ENCODE measurements at regions of chr5 and their contacts with region 1.

Region 1: DNA sequence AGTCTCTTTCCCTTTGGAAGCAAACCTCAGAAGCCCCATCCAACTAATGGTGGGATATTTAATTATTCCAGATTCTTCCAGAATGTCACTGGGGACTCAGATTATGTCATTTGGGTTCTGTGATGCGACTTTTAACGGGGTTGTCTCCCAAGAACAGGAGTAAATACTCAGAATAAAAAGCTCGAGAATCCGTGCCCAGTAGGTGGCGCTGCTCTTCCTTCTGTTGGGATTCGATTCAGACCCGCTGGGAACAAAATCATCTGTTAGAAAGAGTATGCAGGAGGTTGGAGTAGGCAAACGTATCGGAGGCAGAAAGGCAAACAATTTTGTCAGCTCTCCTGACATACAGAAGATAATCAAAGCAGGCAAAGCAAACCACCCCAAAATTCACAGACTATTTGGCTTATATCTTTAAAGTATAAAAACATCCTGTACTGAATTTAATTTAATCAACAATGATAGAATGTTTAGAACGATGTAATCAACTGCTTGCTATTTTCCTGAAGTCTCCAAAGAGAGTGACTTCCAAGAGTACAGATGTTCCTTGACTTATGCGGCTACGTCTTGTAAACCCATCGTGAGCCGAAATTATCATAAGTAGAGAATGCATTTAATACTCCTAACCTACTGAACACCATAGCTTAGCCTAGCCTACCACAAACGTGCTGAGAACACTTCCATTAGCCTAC is 169.8 kb upstream of the RAI14 start:
- DNase-seq: peak; percentile 86
- ATAC-seq: peak; percentile 58
- H3K4me3 Mint-ChIP-seq: no peak overlapping the region
- H3K27ac Mint-ChIP-seq: no peak overlapping the region
- H3K4me1 Mint-ChIP-seq: peaks cover 8% of the 10 kb centered on the region
- H3K27me3 Mint-ChIP-seq: peaks cover 38% of the 10 kb centered on the region

Region 2: GRCh38 chr5:34474573-34475021 is 11.7 kb before region 1 on chr5:
- CTCF ChIA-PET with region 1: interaction called, 33 read pairs
- POLR2A ChIA-PET with region 1: no interaction called
- intact Hi-C with region 1: no loop called
- DNase-seq: no peak
- ATAC-seq: peak; percentile 49
- H3K4me3 Mint-ChIP-seq: no peak overlapping the region
- H3K27ac Mint-ChIP-seq: no peak overlapping the region
- H3K4me1 Mint-ChIP-seq: no peaks in the 10 kb centered on the region
- H3K27me3 Mint-ChIP-seq: peaks cover 16% of the 10 kb centered on the region

Region 3: GRCh38 chr5:34522599-34523386 is 36.5 kb after region 1 on chr5:
- CTCF ChIA-PET with region 1: interaction called, 7 read pairs
- POLR2A ChIA-PET with region 1: no interaction called
- intact Hi-C with region 1: loop called in 1 of 2 experiments (anchors 5 kb)
- DNase-seq: peak; percentile 75
- ATAC-seq: peak; percentile 65
- H3K4me3 Mint-ChIP-seq: no peak overlapping the region
- H3K27ac Mint-ChIP-seq: no peak overlapping the region
- H3K4me1 Mint-ChIP-seq: peaks cover 3% of the 10 kb centered on the region
- H3K27me3 Mint-ChIP-seq: peaks cover 14% of the 10 kb centered on the region

Region 4: DNA sequence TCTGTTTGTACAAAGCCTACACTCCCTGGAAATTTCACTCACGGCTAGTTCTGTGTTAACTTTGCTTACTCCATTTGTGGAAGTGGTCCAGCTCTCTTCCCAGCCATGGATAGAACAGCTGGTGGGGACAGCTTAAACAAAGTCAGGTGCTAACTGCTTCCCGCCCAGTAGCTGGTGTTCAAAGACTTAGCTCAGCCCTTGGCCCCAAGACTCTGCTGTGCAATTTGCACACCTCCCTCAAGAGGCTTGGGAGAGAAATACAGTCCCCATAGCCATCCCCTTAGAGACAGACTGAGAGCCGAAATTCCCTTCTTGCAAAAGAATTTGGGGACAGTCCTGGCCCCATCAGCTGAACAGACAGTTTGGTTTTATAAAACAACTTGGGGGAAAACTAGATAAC is 96.1 kb after region 1 on chr5:
- CTCF ChIA-PET with region 1: no interaction called
- POLR2A ChIA-PET with region 1: no interaction called
- intact Hi-C with region 1: no loop called
- DNase-seq: no peak
- ATAC-seq: no peak
- H3K4me3 Mint-ChIP-seq: no peak overlapping the region
- H3K27ac Mint-ChIP-seq: no peak overlapping the region
- H3K4me1 Mint-ChIP-seq: peaks cover 11% of the 10 kb centered on the region
- H3K27me3 Mint-ChIP-seq: peaks cover 20% of the 10 kb centered on the region

Region 5: GRCh38 chr5:34632807-34633422 is 146.6 kb after region 1 on chr5:
- CTCF ChIA-PET with region 1: no interaction called
- POLR2A ChIA-PET with region 1: no interaction called
- intact Hi-C with region 1: no loop called
- DNase-seq: no peak
- ATAC-seq: no peak
- H3K4me3 Mint-ChIP-seq: no peak overlapping the region
- H3K27ac Mint-ChIP-seq: no peak overlapping the region
- H3K4me1 Mint-ChIP-seq: no peaks in the 10 kb centered on the region
- H3K27me3 Mint-ChIP-seq: peaks cover 5% of the 10 kb centered on the region

Region 6: GRCh38 chr5:34771064-34771463 is 284.8 kb after region 1 on chr5:
- CTCF ChIA-PET with region 1: no interaction called
- POLR2A ChIA-PET with region 1: no interaction called
- intact Hi-C with region 1: no loop called
- DNase-seq: no peak
- ATAC-seq: no peak
- H3K4me3 Mint-ChIP-seq: no peak overlapping the region
- H3K27ac Mint-ChIP-seq: no peak overlapping the region
- H3K4me1 Mint-ChIP-seq: no peaks in the 10 kb centered on the region
- H3K27me3 Mint-ChIP-seq: peaks cover 17% of the 10 kb centered on the region

Region 7: GRCh38 chr5:34838785-34839714 is 352.7 kb after region 1 on chr5 and contains the start of gene TTC23L:
- CTCF ChIA-PET with region 1: interaction called, 3 read pairs
- POLR2A ChIA-PET with region 1: no interaction called
- intact Hi-C with region 1: loop called in 1 of 2 experiments (anchors 5 kb)
- DNase-seq: peak; percentile 95
- ATAC-seq: peak; percentile 95
- H3K4me3 Mint-ChIP-seq: peak within 1 kb of the TSS; percentile 80
- H3K27ac Mint-ChIP-seq: peak within 1 kb of the TSS; percentile 95
- H3K4me1 Mint-ChIP-seq: peaks cover 13% of the 10 kb centered on the region
- H3K27me3 Mint-ChIP-seq: no peaks in the 10 kb centered on the region
- total RNA-seq, gene TTC23L: 0.26 to 0.30 TPM

Region 8: DNA sequence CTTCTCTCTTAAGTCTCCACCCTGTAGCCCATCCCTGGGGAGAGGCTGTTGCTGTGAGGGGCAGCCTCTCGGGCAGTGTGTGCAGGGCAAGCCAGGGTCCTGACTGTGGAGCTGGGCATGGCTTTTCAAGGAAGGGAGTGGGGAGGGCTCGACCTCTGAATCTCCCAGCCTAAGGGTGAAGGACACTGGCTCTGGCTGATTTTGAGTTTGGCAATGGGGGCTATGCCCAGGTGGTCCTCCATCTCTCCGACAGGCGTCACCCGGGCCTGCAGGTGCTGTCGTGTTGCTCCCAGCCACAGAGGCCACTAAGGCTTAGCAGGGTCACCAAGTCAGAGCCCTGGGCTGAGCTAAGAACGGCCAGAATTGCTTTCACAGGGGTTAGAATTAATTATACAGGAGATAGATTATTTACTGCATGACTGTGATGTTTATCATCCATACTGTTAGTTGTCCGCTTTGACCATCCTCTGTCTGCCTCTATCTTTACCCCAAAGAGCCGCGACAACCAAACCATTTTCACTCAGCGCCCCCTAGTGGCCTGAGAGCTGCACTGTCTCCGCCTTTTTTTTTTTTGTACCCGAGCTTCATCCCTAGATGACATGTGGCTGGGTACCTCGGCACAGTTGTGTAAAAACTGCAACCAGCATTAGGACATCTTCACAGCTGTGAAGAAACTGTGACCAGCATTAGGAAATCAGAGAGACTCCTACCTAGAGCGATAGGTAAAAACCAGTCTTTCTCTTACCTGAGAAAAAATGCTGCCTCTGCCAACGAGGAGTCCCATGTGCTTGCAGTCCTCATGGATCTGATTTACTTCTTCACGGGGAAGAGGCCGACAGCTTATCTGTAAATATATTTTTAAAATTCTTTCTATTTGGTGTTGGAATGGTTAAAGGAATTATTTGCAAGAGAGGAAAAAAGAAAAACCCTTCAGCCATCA is 517.0 kb after region 1 on chr5:
- CTCF ChIA-PET with region 1: interaction called, 10 read pairs
- POLR2A ChIA-PET with region 1: no interaction called
- intact Hi-C with region 1: loop called (anchors 1 to 2 kb)
- DNase-seq: peak; percentile 79
- ATAC-seq: peak; percentile 72
- H3K4me3 Mint-ChIP-seq: no peak overlapping the region
- H3K27ac Mint-ChIP-seq: no peak overlapping the region
- H3K4me1 Mint-ChIP-seq: no peaks in the 10 kb centered on the region
- H3K27me3 Mint-ChIP-seq: peaks cover 20% of the 10 kb centered on the region